ENCODE measurements at regions of chr6 and their contacts with region 1.

Region 1: GRCh38 chr6:157667211-157668008 is 155.6 kb upstream of the SNX9 start:
- DNase-seq: peak; percentile 82
- ATAC-seq: peak; percentile 74
- H3K4me3 ChIP-seq: no peak overlapping the region
- H3K4me3 Mint-ChIP-seq: peak overlapping the region; percentile 59
- H3K27ac ChIP-seq: no peak overlapping the region
- H3K27ac Mint-ChIP-seq: peak overlapping the region; percentile 48
- H3K4me1 ChIP-seq: peaks cover 9 to 10% of the 10 kb centered on the region in 2 donors
- H3K4me1 Mint-ChIP-seq: peaks cover 8% of the 10 kb centered on the region
- H3K27me3 ChIP-seq: no peaks in the 10 kb centered on the region
- H3K27me3 Mint-ChIP-seq: no peaks in the 10 kb centered on the region
- CTCF ChIP-seq: peak; percentile 95

Region 2: GRCh38 chr6:157314705-157315321 is 352.6 kb before region 1 on chr6:
- CTCF ChIA-PET with region 1: interaction called, 155 read pairs
- POLR2A ChIA-PET with region 1: interaction called, 4 read pairs
- intact Hi-C with region 1: loop called (anchors 1 kb)
- DNase-seq: peak; percentile 77
- ATAC-seq: peak; percentile 92
- H3K4me3 ChIP-seq: no peak overlapping the region
- H3K4me3 Mint-ChIP-seq: no peak overlapping the region
- H3K27ac ChIP-seq: no peak overlapping the region
- H3K27ac Mint-ChIP-seq: no peak overlapping the region
- H3K4me1 ChIP-seq: peaks cover 0 to 3% of the 10 kb centered on the region in 2 donors
- H3K4me1 Mint-ChIP-seq: peaks cover 3% of the 10 kb centered on the region
- H3K27me3 ChIP-seq: no peaks in the 10 kb centered on the region
- H3K27me3 Mint-ChIP-seq: no peaks in the 10 kb centered on the region
- CTCF ChIP-seq: peak; percentile 90

Region 3: GRCh38 chr6:157339432-157339831 is 328.0 kb before region 1 on chr6:
- CTCF ChIA-PET with region 1: interaction called, 15 read pairs
- POLR2A ChIA-PET with region 1: no interaction called
- intact Hi-C with region 1: no loop called
- DNase-seq: no peak
- ATAC-seq: no peak
- H3K4me3 ChIP-seq: no peak overlapping the region
- H3K4me3 Mint-ChIP-seq: no peak overlapping the region
- H3K27ac ChIP-seq: no peak overlapping the region
- H3K27ac Mint-ChIP-seq: no peak overlapping the region
- H3K4me1 ChIP-seq: no peaks in the 10 kb centered on the region
- H3K4me1 Mint-ChIP-seq: peaks cover 1% of the 10 kb centered on the region
- H3K27me3 ChIP-seq: peaks cover 0 to 23% (median 18%) of the 10 kb centered on the region in 4 experiments
- H3K27me3 Mint-ChIP-seq: peaks cover 57% of the 10 kb centered on the region
- CTCF ChIP-seq: no peak

Region 4: GRCh38 chr6:157461000-157461915 is 206.2 kb before region 1 on chr6:
- CTCF ChIA-PET with region 1: interaction called, 13 read pairs
- POLR2A ChIA-PET with region 1: no interaction called
- intact Hi-C with region 1: loop called (anchors 5 kb)
- DNase-seq: peak; percentile 84
- ATAC-seq: peak; percentile 67
- H3K4me3 ChIP-seq: peak overlapping the region in 1 of 5 experiments; percentile 30
- H3K4me3 Mint-ChIP-seq: peak overlapping the region; percentile 71
- H3K27ac ChIP-seq: peak overlapping the region; percentile 36 to 53
- H3K27ac Mint-ChIP-seq: peak overlapping the region; percentile 94
- H3K4me1 ChIP-seq: peaks cover 60 to 77% of the 10 kb centered on the region in 2 donors
- H3K4me1 Mint-ChIP-seq: peaks cover 73% of the 10 kb centered on the region
- H3K27me3 ChIP-seq: no peaks in the 10 kb centered on the region
- H3K27me3 Mint-ChIP-seq: no peaks in the 10 kb centered on the region
- CTCF ChIP-seq: peak; percentile 31

Region 5: DNA sequence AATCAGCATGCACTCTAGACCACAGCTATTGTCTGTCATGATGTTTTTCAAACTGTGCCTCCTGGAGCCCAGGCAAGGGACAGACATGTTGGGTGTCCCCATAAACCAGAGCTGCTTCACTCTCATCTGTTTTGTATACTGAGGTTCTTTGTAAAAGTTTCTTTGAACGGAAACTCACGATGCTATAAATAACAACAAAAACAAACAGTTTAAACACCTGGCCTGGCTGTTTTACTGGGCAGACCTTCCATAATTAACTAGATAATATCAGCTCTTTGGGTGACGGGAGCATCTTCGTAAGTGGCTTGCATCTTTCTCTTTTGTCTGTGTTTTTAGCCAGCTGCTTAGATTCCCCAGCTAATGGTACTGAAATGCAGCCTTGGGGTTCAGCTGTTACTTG is 96.1 kb before region 1 on chr6:
- CTCF ChIA-PET with region 1: interaction called, 12 read pairs
- POLR2A ChIA-PET with region 1: no interaction called
- intact Hi-C with region 1: no loop called
- DNase-seq: peak; percentile 22
- ATAC-seq: peak; percentile 54
- H3K4me3 ChIP-seq: peak overlapping the region in 2 of 5 experiments; percentile 12 to 22
- H3K4me3 Mint-ChIP-seq: peak overlapping the region; percentile 66
- H3K27ac ChIP-seq: peak overlapping the region in 1 of 2 donors; percentile 47
- H3K27ac Mint-ChIP-seq: peak overlapping the region; percentile 71
- H3K4me1 ChIP-seq: peaks cover 38 to 41% of the 10 kb centered on the region in 2 donors
- H3K4me1 Mint-ChIP-seq: peaks cover 46% of the 10 kb centered on the region
- H3K27me3 ChIP-seq: no peaks in the 10 kb centered on the region
- H3K27me3 Mint-ChIP-seq: no peaks in the 10 kb centered on the region
- CTCF ChIP-seq: no peak

Region 6: GRCh38 chr6:157614026-157614568 is 53.3 kb before region 1 on chr6:
- CTCF ChIA-PET with region 1: interaction called, 38 read pairs
- POLR2A ChIA-PET with region 1: no interaction called
- intact Hi-C with region 1: no loop called
- DNase-seq: peak; percentile 65
- ATAC-seq: peak; percentile 64
- H3K4me3 ChIP-seq: no peak overlapping the region
- H3K4me3 Mint-ChIP-seq: peak overlapping the region; percentile 67
- H3K27ac ChIP-seq: peak overlapping the region; percentile 57 to 68
- H3K27ac Mint-ChIP-seq: peak overlapping the region; percentile 83
- H3K4me1 ChIP-seq: peaks cover 36 to 67% of the 10 kb centered on the region in 2 donors
- H3K4me1 Mint-ChIP-seq: peaks cover 59% of the 10 kb centered on the region
- H3K27me3 ChIP-seq: no peaks in the 10 kb centered on the region
- H3K27me3 Mint-ChIP-seq: no peaks in the 10 kb centered on the region
- CTCF ChIP-seq: no peak

Region 7: DNA sequence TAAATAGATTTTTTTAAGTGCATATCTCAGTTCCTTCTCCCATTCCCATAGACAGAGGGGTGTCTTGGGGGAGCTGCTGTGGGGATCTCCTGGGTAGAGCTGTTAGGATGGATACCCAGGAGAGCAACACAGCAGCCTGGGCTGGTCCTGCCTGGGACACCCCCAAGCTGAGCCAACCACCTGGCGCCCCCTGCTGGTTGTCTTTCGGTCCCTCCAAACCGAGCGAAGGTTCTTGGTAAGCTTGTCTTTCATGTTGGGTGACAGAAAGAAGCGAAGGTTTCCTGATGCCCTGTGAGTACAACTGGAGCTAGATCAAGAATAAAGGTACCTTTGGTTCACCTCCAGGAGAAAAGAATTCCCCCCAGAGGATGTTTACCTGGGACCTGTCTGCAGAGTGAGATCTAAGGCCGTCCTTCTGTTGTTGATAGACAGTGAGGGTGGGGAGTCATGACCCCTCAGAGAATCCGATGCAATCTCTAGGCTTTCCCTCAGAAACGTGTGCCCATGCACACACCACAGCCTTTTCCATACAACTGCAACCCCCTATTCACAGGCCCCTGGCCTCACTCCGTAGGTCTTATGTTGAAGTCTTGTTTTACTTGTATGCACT is 206.4 kb after region 1 on chr6:
- CTCF ChIA-PET with region 1: interaction called, 16 read pairs
- POLR2A ChIA-PET with region 1: no interaction called
- intact Hi-C with region 1: loop called (anchors 10 kb)
- DNase-seq: peak; percentile 85
- ATAC-seq: peak; percentile 86
- H3K4me3 ChIP-seq: no peak overlapping the region
- H3K4me3 Mint-ChIP-seq: no peak overlapping the region
- H3K27ac ChIP-seq: no peak overlapping the region
- H3K27ac Mint-ChIP-seq: no peak overlapping the region
- H3K4me1 ChIP-seq: peaks cover 12 to 16% of the 10 kb centered on the region in 2 donors
- H3K4me1 Mint-ChIP-seq: peaks cover 26% of the 10 kb centered on the region
- H3K27me3 ChIP-seq: no peaks in the 10 kb centered on the region
- H3K27me3 Mint-ChIP-seq: no peaks in the 10 kb centered on the region
- CTCF ChIP-seq: peak; percentile 96

Region 8: DNA sequence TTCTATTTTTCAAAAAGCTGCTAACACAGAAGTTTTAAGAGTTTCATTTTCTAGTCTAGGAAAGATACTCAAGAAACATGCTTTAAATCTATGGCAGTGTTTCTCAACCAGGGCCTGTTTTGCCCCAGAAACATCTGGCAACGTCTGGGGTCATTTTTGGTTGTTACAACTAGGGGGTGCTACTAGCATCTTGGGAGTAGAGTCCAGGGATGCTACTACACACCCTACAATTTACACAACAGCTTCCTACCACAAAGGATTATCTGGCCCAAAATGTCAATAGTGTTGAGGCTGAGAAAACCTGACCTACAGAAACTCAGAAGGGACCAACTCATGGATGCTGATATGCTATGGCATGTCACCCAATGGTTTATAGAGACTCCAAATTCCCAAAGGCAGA is 476.3 kb after region 1 on chr6:
- CTCF ChIA-PET with region 1: no interaction called
- POLR2A ChIA-PET with region 1: no interaction called
- intact Hi-C with region 1: no loop called
- DNase-seq: no peak
- ATAC-seq: no peak
- H3K4me3 ChIP-seq: no peak overlapping the region
- H3K4me3 Mint-ChIP-seq: no peak overlapping the region
- H3K27ac ChIP-seq: no peak overlapping the region
- H3K27ac Mint-ChIP-seq: no peak overlapping the region
- H3K4me1 ChIP-seq: no peaks in the 10 kb centered on the region
- H3K4me1 Mint-ChIP-seq: no peaks in the 10 kb centered on the region
- H3K27me3 ChIP-seq: no peaks in the 10 kb centered on the region
- H3K27me3 Mint-ChIP-seq: no peaks in the 10 kb centered on the region
- CTCF ChIP-seq: no peak